Heart right ventricle (tissue), 16 donors: ENCODE measurements at regions of chr20 and their contacts with region 1.

Region 1: DNA sequence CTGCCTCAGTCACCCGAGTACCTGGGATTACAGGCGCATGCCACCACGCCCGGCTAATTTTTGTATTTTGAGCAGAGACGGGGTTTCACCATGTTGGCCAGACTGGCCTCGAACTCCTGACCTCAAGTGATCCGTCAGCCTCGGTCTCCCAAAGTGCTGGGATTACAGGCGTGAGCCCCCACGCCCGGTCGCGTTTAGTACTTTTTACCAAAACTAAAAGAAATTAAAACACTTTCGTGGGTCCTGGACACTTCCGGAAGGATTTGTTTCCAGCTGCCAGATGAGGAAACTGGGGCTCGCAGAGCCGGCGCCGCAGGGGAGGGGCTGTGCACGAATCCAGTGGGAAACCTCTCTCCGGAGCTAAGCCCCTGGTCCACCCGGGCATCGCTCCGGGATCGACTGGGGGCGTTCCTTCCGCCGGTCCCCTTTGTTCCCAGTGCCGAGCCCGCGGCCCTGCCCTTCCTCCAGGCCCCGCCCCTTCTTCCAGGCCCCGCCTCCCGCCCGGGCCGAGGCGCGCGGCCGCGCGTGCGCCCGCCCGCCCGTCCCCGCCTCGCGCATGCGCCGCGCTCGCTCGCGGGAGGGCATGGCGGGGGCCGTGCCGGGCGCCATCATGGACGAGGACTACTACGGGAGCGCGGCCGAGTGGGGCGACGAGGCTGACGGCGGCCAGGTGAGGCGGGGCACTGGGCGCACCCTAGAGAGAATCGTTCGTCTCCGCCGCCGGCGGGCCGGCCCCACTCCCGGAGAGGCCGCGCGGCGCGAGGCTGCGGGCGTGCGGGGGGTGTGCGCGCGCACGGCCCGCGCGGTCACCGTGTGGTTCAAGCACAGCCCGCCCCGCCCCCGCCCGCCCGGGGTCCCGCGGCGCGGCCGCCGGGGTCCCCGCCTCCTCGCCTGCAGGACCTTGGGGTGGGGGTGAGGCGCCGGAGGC is at the start of gene NELFCD:
- DNase-seq: peak; percentile 86 to 92
- ATAC-seq: peak; percentile 92 to 97 (median 94)
- H3K4me3 ChIP-seq: peak within 1 kb of the TSS; percentile 47 to 82 (median 68)
- H3K27ac ChIP-seq: peak within 1 kb of the TSS; percentile 63 to 91 (median 87)
- H3K4me1 ChIP-seq: peaks cover 0 to 45% (median 35%) of the 10 kb centered on the region in 9 donors
- H3K27me3 ChIP-seq: no peaks in the 10 kb centered on the region
- CTCF ChIP-seq: no peak
- total RNA-seq, gene NELFCD: 23.2 to 40.5 (median 31.1) TPM

Region 2: DNA sequence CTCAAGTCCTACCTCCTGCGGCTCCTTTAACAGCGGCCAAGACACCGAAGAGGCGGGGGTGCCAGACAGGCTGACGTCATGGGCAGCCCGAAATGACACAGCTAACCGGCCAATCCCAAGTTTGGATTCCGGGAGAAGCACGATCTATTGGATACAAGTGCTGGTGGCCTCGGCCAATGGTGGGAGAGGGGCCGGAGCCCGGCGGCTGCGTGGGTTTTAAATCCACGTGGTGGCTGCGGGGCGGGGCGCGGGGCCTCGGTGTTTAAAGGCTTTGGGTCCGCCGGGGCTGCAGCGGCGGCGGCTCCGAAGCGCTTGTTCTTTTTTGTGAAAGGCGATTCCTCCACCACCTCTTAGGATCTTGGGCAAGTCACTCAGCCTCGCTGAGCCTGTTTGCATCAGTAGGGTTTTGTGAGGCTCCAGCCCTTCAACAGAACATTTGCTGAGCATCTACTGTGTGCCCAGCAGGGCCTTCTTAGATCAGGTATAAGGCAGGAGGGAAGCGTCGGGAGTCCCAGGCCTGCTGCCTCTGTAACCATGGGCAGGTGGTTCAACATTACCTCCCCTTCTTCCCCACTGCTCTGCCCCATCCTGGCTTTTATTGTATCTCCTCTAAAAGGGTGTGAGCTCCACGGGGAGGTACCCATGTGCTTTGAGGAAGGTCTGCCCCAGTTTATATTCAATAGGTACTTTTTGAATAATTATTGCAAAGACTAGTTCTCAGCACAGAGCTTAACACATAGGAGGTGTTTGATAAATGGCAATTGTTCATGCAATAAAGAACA is 1262.3 kb before region 1 on chr20:
- intact Hi-C with region 1: loop called in 1 of 10 experiments (anchors 10 kb)
- DNase-seq: peak; percentile 94 to 98
- ATAC-seq: peak; percentile 90 to 99 (median 97)
- H3K4me3 ChIP-seq: peak overlapping the region in 8 of 10 donors; percentile 0 to 44 (median 35)
- H3K27ac ChIP-seq: no peak overlapping the region
- H3K4me1 ChIP-seq: peaks cover 4 to 47% (median 27%) of the 10 kb centered on the region in 9 donors
- H3K27me3 ChIP-seq: no peaks in the 10 kb centered on the region
- CTCF ChIP-seq: no peak

Region 3: DNA sequence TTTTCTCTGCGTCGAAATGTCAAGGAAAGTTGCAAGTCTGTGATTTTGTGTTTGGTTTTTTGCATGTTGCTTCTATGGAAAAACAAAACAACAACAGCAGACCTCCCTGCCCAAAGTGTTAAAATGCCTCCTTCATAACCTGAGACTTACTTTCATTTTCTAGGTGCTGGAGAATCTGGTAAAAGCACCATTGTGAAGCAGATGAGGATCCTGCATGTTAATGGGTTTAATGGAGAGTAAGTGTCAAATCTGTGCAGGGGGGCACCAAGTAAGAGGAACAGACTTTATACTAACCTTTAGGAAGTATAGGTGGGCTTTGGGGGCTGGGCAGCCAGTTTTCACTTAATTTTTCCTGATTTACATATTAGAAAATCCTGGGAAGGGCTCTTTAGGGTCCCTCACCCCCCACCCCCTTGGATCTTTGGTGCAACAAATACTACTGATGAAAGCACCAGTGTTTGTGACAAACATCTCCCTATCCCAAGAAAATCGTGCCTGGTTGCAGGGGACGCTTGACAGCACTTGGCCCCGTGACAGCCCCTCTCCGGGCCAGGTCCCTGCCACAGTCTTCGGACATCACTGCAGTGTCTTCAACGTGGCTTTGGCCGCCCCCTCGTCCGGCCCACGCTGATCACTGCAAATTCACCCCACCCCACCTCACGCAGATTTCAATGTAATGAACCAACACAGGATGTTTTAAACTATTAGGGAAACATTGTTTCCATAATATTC is 85.3 kb before region 1 on chr20:
- intact Hi-C with region 1: loop called in 5 of 10 experiments (anchors 2 to 5 kb)
- DNase-seq: peak in 1 of 2 donors; percentile 39
- ATAC-seq: no peak
- H3K4me3 ChIP-seq: peak overlapping the region in 7 of 10 donors; percentile 4 to 92 (median 80)
- H3K27ac ChIP-seq: peak overlapping the region in 7 of 10 donors; percentile 1 to 100 (median 47)
- H3K4me1 ChIP-seq: peaks cover 28 to 78% (median 74%) of the 10 kb centered on the region in 9 donors
- H3K27me3 ChIP-seq: no peaks in the 10 kb centered on the region
- CTCF ChIP-seq: no peak

Region 4: GRCh38 chr20:58907399-58908137 is 73.4 kb before region 1 on chr20:
- intact Hi-C with region 1: loop called in 1 of 10 experiments (anchors 5 kb)
- DNase-seq: peak; percentile 72 to 97
- ATAC-seq: peak; percentile 91 to 98 (median 97)
- H3K4me3 ChIP-seq: peak overlapping the region in 8 of 10 donors; percentile 6 to 44 (median 32)
- H3K27ac ChIP-seq: peak overlapping the region; percentile 44 to 93 (median 82)
- H3K4me1 ChIP-seq: peaks cover 16 to 76% (median 51%) of the 10 kb centered on the region in 9 donors
- H3K27me3 ChIP-seq: no peaks in the 10 kb centered on the region
- CTCF ChIP-seq: no peak

Region 5: DNA sequence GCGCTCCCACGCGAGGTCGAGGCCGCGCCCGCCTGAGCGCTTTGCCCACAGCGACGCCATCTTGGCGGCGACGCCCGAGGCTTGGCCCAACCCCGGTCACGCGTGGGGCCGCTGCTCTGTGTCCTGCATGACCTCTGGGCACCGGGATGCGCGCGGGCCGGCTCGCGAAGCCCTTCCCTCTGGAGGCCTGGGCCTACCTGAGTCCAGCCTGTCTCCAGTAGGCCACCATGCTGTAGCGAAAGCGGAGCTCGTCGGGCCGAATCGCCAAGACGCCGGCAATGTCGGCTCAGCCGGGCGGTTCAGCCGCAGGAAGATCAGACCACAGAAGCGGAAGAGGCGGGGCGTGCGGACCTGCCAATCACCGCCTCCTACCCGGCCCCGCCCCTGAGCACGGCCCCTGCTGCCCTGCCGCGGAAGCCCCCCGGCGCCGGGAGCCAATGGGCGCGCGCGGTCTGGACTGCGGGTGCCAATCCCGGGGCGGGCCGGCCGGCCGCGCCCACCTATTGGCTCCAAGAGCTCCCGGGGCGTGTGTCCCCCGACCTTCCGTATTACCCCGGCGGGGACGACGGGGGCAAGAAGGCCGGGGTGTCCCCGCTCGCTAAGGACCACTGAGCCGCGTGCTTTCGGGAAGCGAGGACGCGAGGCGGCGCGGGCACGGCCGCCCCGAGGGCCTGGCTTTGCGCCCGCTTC is 51.2 kb after region 1 on chr20 and contains the start of gene ATP5F1E:
- intact Hi-C with region 1: loop called in 5 of 10 experiments (anchors 1 to 10 kb)
- DNase-seq: peak; percentile 95 to 97
- ATAC-seq: peak; percentile 99 to 100 (median 100)
- H3K4me3 ChIP-seq: peak within 1 kb of the TSS; percentile 55 to 96 (median 82)
- H3K27ac ChIP-seq: peak within 1 kb of the TSS; percentile 83 to 96 (median 94)
- H3K4me1 ChIP-seq: peaks cover 17 to 56% (median 47%) of the 10 kb centered on the region in 9 donors
- H3K27me3 ChIP-seq: no peaks in the 10 kb centered on the region
- CTCF ChIP-seq: no peak
- total RNA-seq, gene ATP5F1E: 105 to 155 (median 121) TPM